ENCODE measurements at regions of chr7 and their contacts with region 1.

Region 1: DNA sequence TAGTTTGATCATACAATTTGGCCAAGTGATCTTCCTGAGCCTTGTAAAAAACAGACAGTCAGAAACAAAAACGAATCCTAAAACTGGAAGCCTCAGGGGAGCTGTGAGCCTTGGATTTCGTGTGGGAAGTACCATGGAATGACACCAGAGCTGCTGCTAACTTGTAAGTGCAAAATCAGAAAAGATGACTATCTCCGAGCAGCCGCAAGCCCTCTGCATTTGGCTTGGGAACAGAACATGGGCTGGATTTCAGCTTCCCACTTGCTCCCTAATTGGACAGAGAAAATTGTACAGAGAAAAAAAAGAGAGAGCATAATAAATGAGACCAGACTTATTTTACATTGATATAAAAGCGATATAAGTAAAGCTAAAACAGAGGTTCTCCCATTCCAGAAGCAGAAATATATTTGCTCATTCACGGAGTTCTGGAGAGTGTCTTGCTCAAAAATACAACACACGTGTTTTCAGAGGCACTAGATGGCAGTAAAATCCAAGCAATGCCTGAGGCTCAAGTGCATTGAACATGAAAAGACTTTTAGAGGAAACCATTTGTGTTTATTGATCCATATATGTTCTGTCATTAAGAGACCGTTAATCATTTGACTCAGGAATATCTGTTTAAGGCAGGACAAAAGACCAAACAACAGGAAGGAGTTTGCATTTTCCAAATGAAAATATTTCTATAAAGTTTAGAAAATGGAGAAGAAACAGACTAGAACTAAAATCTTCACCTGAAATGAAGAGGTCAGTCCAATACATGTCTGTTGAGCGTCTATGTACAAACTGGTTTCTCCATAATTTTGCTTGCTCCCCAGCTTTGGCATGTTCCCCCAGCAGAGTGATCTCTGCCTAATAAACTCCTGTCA is 78.3 kb upstream of the SLC26A5 start:
- DNase-seq: no peak
- ATAC-seq: no peak
- H3K4me3 ChIP-seq: no peak overlapping the region
- H3K27ac ChIP-seq: no peak overlapping the region
- H3K4me1 ChIP-seq: no peaks in the 10 kb centered on the region
- H3K27me3 ChIP-seq: no peaks in the 10 kb centered on the region
- CTCF ChIP-seq: no peak
- POLR2A ChIP-seq: no peak

Region 2: GRCh38 chr7:103425188-103425587 is 99.1 kb before region 1 on chr7:
- in situ Hi-C with region 1: no loop called
- intact Hi-C with region 1: no loop called
- DNase-seq: no peak
- ATAC-seq: no peak
- H3K4me3 ChIP-seq: no peak overlapping the region
- H3K27ac ChIP-seq: no peak overlapping the region
- H3K4me1 ChIP-seq: no peaks in the 10 kb centered on the region
- H3K27me3 ChIP-seq: no peaks in the 10 kb centered on the region
- CTCF ChIP-seq: no peak
- POLR2A ChIP-seq: no peak

Region 3: DNA sequence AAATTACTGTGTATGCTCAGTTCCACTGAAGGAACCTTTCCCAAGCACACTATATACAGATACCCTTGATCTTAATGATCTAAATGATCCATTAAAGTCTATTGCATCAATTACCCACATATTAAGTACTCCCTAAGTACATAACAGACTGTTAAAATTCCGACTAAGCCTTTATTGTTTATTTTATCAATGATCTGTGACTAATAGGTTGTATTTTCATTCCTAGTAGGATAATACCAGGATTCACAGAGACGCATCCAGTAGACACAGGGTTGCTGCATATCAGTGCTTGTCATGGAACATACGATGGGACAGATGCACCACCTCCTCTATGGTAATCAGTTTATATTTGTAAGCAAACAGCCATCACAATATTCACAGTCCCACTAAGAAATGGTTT is 81.4 kb after region 1 on chr7:
- in situ Hi-C with region 1: no loop called
- intact Hi-C with region 1: no loop called
- DNase-seq: no peak
- ATAC-seq: no peak
- H3K4me3 ChIP-seq: no peak overlapping the region
- H3K27ac ChIP-seq: no peak overlapping the region
- H3K4me1 ChIP-seq: no peaks in the 10 kb centered on the region
- H3K27me3 ChIP-seq: no peaks in the 10 kb centered on the region
- CTCF ChIP-seq: no peak
- POLR2A ChIP-seq: no peak

Region 4: GRCh38 chr7:104848138-104848990 is 1324.1 kb after region 1 on chr7:
- in situ Hi-C with region 1: no loop called
- intact Hi-C with region 1: loop called (anchors 5 kb)
- DNase-seq: no peak
- ATAC-seq: peak in 1 of 2 donors; percentile 77
- H3K4me3 ChIP-seq: no peak overlapping the region
- H3K27ac ChIP-seq: no peak overlapping the region
- H3K4me1 ChIP-seq: no peaks in the 10 kb centered on the region
- H3K27me3 ChIP-seq: peaks cover 0 to 6% (median 3%) of the 10 kb centered on the region in 3 donors
- CTCF ChIP-seq: peak; percentile 50 to 77 (median 64)
- POLR2A ChIP-seq: no peak

Measured in gastrocnemius medialis (tissue), 4 donors.